Naive thymus-derived CD4-positive, alpha-beta T cell (primary cell): ENCODE measurements at regions of chr15 and their contacts with region 1.

Region 1: GRCh38 chr15:63497642-63498467 is 6.5 kb upstream of the USP3 start:
- DNase-seq: peak; percentile 52 to 89 (median 82)
- ATAC-seq: peak; percentile 90
- H3K4me3 ChIP-seq: peak overlapping the region; percentile 6
- H3K4me3 Mint-ChIP-seq: no peak overlapping the region
- H3K27ac ChIP-seq: peak overlapping the region; percentile 97
- H3K27ac Mint-ChIP-seq: no peak overlapping the region
- H3K4me1 ChIP-seq: peaks cover 84 to 91% of the 10 kb centered on the region in 2 donors
- H3K4me1 Mint-ChIP-seq: peaks cover 17 to 80% (median 57%) of the 10 kb centered on the region in 7 donors
- H3K27me3 ChIP-seq: no peaks in the 10 kb centered on the region
- H3K27me3 Mint-ChIP-seq: no peaks in the 10 kb centered on the region

Region 2: DNA sequence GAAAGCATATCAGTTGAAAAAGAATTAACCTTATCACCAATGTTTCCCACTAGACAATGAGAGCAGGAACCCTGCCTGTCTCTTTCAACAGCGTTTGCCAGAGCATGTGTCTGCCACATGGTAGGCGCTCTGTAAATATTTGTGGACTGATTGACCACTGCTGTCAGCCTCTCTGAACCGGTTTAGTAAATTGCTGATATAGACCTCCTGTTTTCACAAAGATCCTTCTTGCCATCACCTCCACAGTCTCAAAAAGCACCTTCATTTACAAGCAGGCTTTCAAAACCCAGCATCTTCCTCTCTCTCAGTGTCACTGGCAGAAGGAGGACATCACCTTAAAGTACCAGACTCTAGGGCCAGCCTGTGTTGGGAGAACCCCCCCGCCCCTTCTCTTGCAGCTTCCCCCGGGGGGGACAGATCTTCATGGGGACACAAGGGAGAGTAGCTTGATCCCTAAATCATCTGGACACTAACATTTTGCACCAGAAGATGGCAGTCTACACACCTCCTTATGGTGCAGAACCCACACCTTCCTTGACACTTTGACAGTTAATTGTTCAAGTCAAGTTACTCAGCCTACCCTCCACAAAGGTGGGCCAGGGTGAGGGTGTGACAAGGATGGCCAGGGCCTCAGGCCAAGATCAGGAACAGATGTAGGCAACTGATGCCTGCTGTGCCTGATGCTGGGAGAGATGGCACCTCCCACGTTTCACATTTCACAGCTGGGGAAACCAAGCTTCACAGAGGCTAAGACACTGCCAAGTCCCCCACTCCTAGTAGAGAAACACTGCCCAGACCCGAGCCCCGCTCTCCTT is 31.3 kb before region 1 on chr15:
- CTCF ChIA-PET with region 1: interaction called, 15 read pairs
- POLR2A ChIA-PET with region 1: interaction called, 392 read pairs
- intact Hi-C with region 1: no loop called
- DNase-seq: peak in 8 of 9 donors; percentile 46 to 80 (median 74)
- ATAC-seq: peak; percentile 95
- H3K4me3 ChIP-seq: no peak overlapping the region
- H3K4me3 Mint-ChIP-seq: peak overlapping the region in 2 of 10 donors; percentile 5 to 6
- H3K27ac ChIP-seq: no peak overlapping the region
- H3K27ac Mint-ChIP-seq: peak overlapping the region; percentile 37 to 96 (median 82)
- H3K4me1 ChIP-seq: peaks cover 0 to 4% of the 10 kb centered on the region in 2 donors
- H3K4me1 Mint-ChIP-seq: peaks cover 12 to 43% (median 33%) of the 10 kb centered on the region in 7 donors
- H3K27me3 ChIP-seq: no peaks in the 10 kb centered on the region
- H3K27me3 Mint-ChIP-seq: peaks cover 0 to 18% (median 0%) of the 10 kb centered on the region in 5 donors

Region 3: GRCh38 chr15:63473999-63474809 is 23.7 kb before region 1 on chr15:
- CTCF ChIA-PET with region 1: interaction called, 70 read pairs
- POLR2A ChIA-PET with region 1: interaction called, 392 read pairs
- intact Hi-C with region 1: loop called (anchors 1 kb)
- DNase-seq: peak in 5 of 9 donors; percentile 36 to 76 (median 51)
- ATAC-seq: peak; percentile 86
- H3K4me3 ChIP-seq: no peak overlapping the region
- H3K4me3 Mint-ChIP-seq: peak overlapping the region in 8 of 10 donors; percentile 44 to 75 (median 65)
- H3K27ac ChIP-seq: peak overlapping the region; percentile 50
- H3K27ac Mint-ChIP-seq: peak overlapping the region; percentile 86 to 98 (median 94)
- H3K4me1 ChIP-seq: peaks cover 11 to 44% of the 10 kb centered on the region in 2 donors
- H3K4me1 Mint-ChIP-seq: peaks cover 32 to 70% (median 61%) of the 10 kb centered on the region in 7 donors
- H3K27me3 ChIP-seq: no peaks in the 10 kb centered on the region
- H3K27me3 Mint-ChIP-seq: no peaks in the 10 kb centered on the region

Region 4: GRCh38 chr15:63481105-63481810 is 16.6 kb before region 1 on chr15:
- CTCF ChIA-PET with region 1: interaction called, 70 read pairs
- POLR2A ChIA-PET with region 1: interaction called, 392 read pairs
- intact Hi-C with region 1: loop called (anchors 1 kb)
- DNase-seq: no peak
- ATAC-seq: peak; percentile 18
- H3K4me3 ChIP-seq: peak overlapping the region; percentile 18
- H3K4me3 Mint-ChIP-seq: peak overlapping the region in 7 of 10 donors; percentile 42 to 90 (median 78)
- H3K27ac ChIP-seq: peak overlapping the region; percentile 96
- H3K27ac Mint-ChIP-seq: peak overlapping the region; percentile 99 to 100 (median 99)
- H3K4me1 ChIP-seq: peaks cover 54 to 81% of the 10 kb centered on the region in 2 donors
- H3K4me1 Mint-ChIP-seq: peaks cover 46 to 91% (median 80%) of the 10 kb centered on the region in 7 donors
- H3K27me3 ChIP-seq: no peaks in the 10 kb centered on the region
- H3K27me3 Mint-ChIP-seq: no peaks in the 10 kb centered on the region

Region 5: GRCh38 chr15:63514531-63514943 is 16.7 kb after region 1 on chr15:
- CTCF ChIA-PET with region 1: interaction called, 5 read pairs
- POLR2A ChIA-PET with region 1: interaction called, 16 read pairs
- intact Hi-C with region 1: no loop called
- DNase-seq: no peak
- ATAC-seq: peak; percentile 40
- H3K4me3 ChIP-seq: no peak overlapping the region
- H3K4me3 Mint-ChIP-seq: peak overlapping the region in 9 of 10 donors; percentile 9 to 80 (median 65)
- H3K27ac ChIP-seq: no peak overlapping the region
- H3K27ac Mint-ChIP-seq: peak overlapping the region in 7 of 9 donors; percentile 26 to 88 (median 79)
- H3K4me1 ChIP-seq: peaks cover 57 to 84% of the 10 kb centered on the region in 2 donors
- H3K4me1 Mint-ChIP-seq: peaks cover 58 to 99% (median 97%) of the 10 kb centered on the region in 7 donors
- H3K27me3 ChIP-seq: no peaks in the 10 kb centered on the region
- H3K27me3 Mint-ChIP-seq: no peaks in the 10 kb centered on the region